ENCODE measurements at regions of chr10 and their contacts with region 1.

Region 1: GRCh38 chr10:121886997-121887622 is 40.7 kb downstream of the ATE1 start:
- DNase-seq: peak in 1 of 2 donors; percentile 41
- ATAC-seq: peak in 3 of 4 donors; percentile 78 to 81 (median 81)
- H3K4me3 ChIP-seq: no peak overlapping the region
- H3K27ac ChIP-seq: no peak overlapping the region
- H3K4me1 ChIP-seq: no peaks in the 10 kb centered on the region
- H3K27me3 ChIP-seq: no peaks in the 10 kb centered on the region
- CTCF ChIP-seq: peak; percentile 71

Region 2: GRCh38 chr10:120948889-120949608 is 938.1 kb before region 1 on chr10:
- intact Hi-C with region 1: loop called in 1 of 2 experiments (anchors 5 kb)
- DNase-seq: peak; percentile 66 to 73
- ATAC-seq: peak; percentile 68 to 88 (median 83)
- H3K4me3 ChIP-seq: peak overlapping the region; percentile 55
- H3K27ac ChIP-seq: no peak overlapping the region
- H3K4me1 ChIP-seq: peaks cover 9% of the 10 kb centered on the region
- H3K27me3 ChIP-seq: peaks cover 0 to 38% (median 5%) of the 10 kb centered on the region in 3 donors
- CTCF ChIP-seq: peak; percentile 70

Region 3: GRCh38 chr10:121734589-121735045 is 152.5 kb before region 1 on chr10:
- intact Hi-C with region 1: loop called in 1 of 2 experiments (anchors 10 kb)
- DNase-seq: no peak
- ATAC-seq: no peak
- H3K4me3 ChIP-seq: no peak overlapping the region
- H3K27ac ChIP-seq: no peak overlapping the region
- H3K4me1 ChIP-seq: no peaks in the 10 kb centered on the region
- H3K27me3 ChIP-seq: peaks cover 0 to 8% (median 0%) of the 10 kb centered on the region in 3 donors
- CTCF ChIP-seq: peak; percentile 69

Region 4: DNA sequence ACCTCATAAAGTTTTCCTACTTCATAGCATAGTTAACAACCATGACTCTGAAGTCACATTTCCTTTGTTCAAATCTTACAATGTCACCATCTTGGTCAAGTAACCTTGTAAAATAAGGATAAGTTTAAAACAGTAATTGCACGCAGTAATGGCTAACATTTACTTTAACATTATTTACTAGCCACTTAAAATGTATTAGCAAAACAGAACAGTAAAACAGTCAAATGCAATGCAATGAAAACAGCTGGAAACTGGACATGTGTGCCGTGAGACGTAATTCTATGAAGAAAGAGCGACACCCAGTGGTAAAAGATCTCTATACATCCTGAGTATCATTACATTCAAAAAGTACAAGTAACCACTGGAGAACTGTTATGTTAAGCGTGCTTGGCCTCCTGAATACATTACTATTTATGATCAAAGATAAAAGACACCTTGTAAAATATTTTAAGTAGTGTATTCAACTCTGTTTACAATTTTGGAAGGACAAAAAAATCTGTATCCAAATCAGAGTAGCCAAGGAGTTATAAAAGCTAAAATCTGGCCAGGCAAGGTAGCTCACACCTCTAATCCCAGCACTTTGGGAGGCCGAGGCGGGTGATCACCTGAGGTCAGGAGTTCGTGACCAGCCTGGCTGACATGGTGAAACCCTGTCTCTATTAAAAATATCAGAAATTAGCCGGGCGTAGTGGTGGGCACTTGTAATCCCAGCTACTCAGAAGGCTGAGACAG is 13.5 kb after region 1 on chr10:
- intact Hi-C with region 1: no loop called
- DNase-seq: no peak
- ATAC-seq: peak; percentile 51 to 84 (median 74)
- H3K4me3 ChIP-seq: no peak overlapping the region
- H3K27ac ChIP-seq: no peak overlapping the region
- H3K4me1 ChIP-seq: no peaks in the 10 kb centered on the region
- H3K27me3 ChIP-seq: no peaks in the 10 kb centered on the region
- CTCF ChIP-seq: peak; percentile 67

Measured in psoas muscle (tissue), 8 donors.